HEK293T (cell line): ENCODE measurements at regions of chr20 and their contacts with region 1.

Region 1: GRCh38 chr20:50929299-50930138 is 1.7 kb downstream of the ADNP start:
- DNase-seq: peak; percentile 85

Region 2: GRCh38 chr20:50744143-50744792 is 185.3 kb before region 1 on chr20:
- CTCF ChIA-PET with region 1: interaction called, 10 read pairs
- POLR2A ChIA-PET with region 1: no interaction called
- DNase-seq: peak; percentile 59

Region 3: GRCh38 chr20:50916279-50916678 is 13.2 kb before region 1 on chr20:
- CTCF ChIA-PET with region 1: interaction called, 15 read pairs
- POLR2A ChIA-PET with region 1: interaction called, 12 read pairs
- DNase-seq: peak; percentile 62

Region 4: GRCh38 chr20:50958615-50959542 is 29.4 kb after region 1 on chr20 and contains the start of gene MOCS3:
- CTCF ChIA-PET with region 1: no interaction called
- POLR2A ChIA-PET with region 1: interaction called, 26 read pairs
- DNase-seq: peak; percentile 82

Region 5: GRCh38 chr20:50987592-50988210 is 58.2 kb after region 1 on chr20:
- CTCF ChIA-PET with region 1: no interaction called
- POLR2A ChIA-PET with region 1: no interaction called
- DNase-seq: peak; percentile 79